OCI-LY7 (cell line): ENCODE measurements at regions of chr11 and their contacts with region 1.

Region 1: DNA sequence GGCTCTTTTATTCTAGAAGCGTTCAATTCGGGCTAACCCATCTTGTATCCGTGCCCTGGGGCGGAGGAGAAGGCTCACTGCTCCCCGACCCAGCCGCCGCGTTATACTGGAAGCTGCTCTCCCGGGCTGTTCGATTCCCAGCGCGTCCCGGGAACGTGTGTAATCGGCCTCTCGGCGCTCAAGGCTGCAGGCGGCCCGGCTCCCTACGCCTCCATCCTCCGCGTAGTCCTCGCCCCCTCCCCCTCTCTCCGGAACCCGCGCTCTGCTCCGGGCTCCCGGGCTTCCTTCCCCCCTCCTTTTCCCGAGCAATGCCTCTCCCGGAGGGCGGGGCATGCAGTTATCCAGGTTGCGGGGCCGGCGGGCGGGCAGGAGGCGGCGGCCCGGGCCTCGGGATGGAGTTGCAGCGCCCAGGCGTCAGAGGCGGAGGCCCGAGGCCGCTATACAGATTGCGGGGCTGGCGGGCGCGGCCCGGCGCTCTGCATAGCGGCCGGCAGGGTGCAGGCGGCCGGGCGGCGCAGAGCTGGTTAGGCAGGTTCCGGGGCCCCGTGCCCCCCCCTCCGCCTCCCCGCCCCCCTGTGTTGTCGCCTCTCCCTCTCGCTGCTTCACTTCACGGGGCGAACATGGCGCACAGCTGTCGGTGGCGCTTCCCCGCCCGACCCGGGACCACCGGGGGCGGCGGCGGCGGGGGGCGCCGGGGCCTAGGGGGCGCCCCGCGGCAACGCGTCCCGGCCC is at the start of gene KMT2A:
- DNase-seq: peak; percentile 97
- H3K4me3 ChIP-seq: peak within 1 kb of the TSS; percentile 87
- H3K27ac ChIP-seq: peak within 1 kb of the TSS; percentile 93
- H3K4me1 ChIP-seq: peaks cover 40% of the 10 kb centered on the region
- CTCF ChIP-seq: no peak; the same call in 1 of the 2 replicates
- total RNA-seq, gene KMT2A: 55.8 and 58.8 TPM in 2 replicates

Region 2: DNA sequence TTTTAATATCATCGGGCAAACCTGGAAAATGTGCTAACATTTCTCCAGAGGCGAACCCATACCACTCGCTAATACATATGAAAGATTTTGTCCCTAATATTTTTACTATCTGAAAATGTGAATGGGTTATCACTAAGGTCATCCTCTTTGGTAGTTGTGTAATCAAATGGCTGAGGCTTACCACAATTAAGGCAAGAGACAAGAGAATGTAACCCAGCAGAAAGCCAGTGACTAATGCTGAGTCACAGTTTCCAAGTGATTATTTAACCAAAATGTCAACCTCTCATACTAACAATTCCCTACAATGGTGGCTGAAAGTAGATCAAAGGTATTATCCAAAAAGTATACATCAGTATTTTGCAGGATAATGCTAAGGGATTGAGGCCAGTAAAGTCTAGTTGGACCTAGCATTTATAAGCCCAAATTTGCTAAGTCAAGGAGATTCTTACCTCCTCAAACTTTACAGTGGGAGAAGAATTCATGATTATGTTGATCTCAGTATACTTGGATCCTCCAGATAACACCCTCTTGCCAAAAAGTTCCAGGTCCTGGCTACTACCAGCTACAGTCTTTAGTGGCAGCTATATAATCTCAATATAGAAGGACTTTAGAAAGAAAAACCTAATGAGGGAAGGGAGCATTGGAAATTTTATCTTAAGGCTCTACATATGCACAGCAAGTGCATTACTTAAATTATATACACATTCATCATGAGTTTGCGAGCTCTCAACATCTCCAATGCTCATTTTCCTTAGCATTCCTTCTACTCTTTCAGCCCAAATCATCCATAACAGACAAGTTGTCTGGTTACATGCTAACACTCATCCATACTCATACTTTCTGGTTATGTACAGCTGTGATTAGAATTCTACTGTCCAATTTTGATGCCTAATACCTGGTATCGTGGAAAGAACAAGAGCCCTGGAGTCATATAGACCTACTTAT is 1363.3 kb before region 1 on chr11:
- CTCF ChIA-PET with region 1: no interaction called
- POLR2A ChIA-PET with region 1: no interaction called
- intact Hi-C with region 1: no loop called
- DNase-seq: no peak
- H3K4me3 ChIP-seq: no peak overlapping the region
- H3K27ac ChIP-seq: no peak overlapping the region
- H3K4me1 ChIP-seq: peaks cover 22% of the 10 kb centered on the region
- CTCF ChIP-seq: no peak

Region 3: GRCh38 chr11:118010738-118011461 is 425.2 kb before region 1 on chr11:
- CTCF ChIA-PET with region 1: no interaction called
- POLR2A ChIA-PET with region 1: no interaction called
- intact Hi-C with region 1: loop called (anchors 5 kb)
- DNase-seq: peak; percentile 93
- H3K4me3 ChIP-seq: peak overlapping the region; percentile 54
- H3K27ac ChIP-seq: peak overlapping the region; percentile 99
- H3K4me1 ChIP-seq: peaks cover 82% of the 10 kb centered on the region
- CTCF ChIP-seq: no peak

Region 4: GRCh38 chr11:118401151-118401878 is 34.7 kb before region 1 on chr11 and contains the start of gene ATP5MG:
- CTCF ChIA-PET with region 1: no interaction called
- POLR2A ChIA-PET with region 1: interaction called, 9 read pairs
- intact Hi-C with region 1: loop called (anchors 1 kb)
- DNase-seq: peak; percentile 97
- H3K4me3 ChIP-seq: peak within 1 kb of the TSS; percentile 79
- H3K27ac ChIP-seq: peak within 1 kb of the TSS; percentile 77
- H3K4me1 ChIP-seq: peaks cover 53% of the 10 kb centered on the region
- CTCF ChIP-seq: 0 out of 2 replicates have a peak, but pooled peaks have one; percentile 22
- total RNA-seq, gene ATP5MG: 212 and 222 TPM in 2 replicates

Region 5: GRCh38 chr11:118488480-118489109 is 52.5 kb after region 1 on chr11:
- CTCF ChIA-PET with region 1: no interaction called
- POLR2A ChIA-PET with region 1: no interaction called
- intact Hi-C with region 1: loop called (anchors 1 kb)
- DNase-seq: peak; percentile 79
- H3K4me3 ChIP-seq: no peak overlapping the region
- H3K27ac ChIP-seq: no peak overlapping the region
- H3K4me1 ChIP-seq: no peaks in the 10 kb centered on the region
- CTCF ChIP-seq: peak; percentile 99

Region 6: GRCh38 chr11:118572061-118572980 is 136.3 kb after region 1 on chr11 and contains the start of gene ARCN1:
- CTCF ChIA-PET with region 1: no interaction called
- POLR2A ChIA-PET with region 1: interaction called, 4 read pairs
- intact Hi-C with region 1: loop called (anchors 5 kb)
- DNase-seq: peak; percentile 90
- H3K4me3 ChIP-seq: peak within 1 kb of the TSS; percentile 94
- H3K27ac ChIP-seq: peak within 1 kb of the TSS; percentile 66
- H3K4me1 ChIP-seq: peaks cover 33% of the 10 kb centered on the region
- CTCF ChIP-seq: 0 out of 2 replicates have a peak, but pooled peaks have one; percentile 16
- total RNA-seq, gene ARCN1: 51.0 and 55.2 TPM in 2 replicates